ENCODE measurements at regions of chr11 and their contacts with region 1.

Region 1: DNA sequence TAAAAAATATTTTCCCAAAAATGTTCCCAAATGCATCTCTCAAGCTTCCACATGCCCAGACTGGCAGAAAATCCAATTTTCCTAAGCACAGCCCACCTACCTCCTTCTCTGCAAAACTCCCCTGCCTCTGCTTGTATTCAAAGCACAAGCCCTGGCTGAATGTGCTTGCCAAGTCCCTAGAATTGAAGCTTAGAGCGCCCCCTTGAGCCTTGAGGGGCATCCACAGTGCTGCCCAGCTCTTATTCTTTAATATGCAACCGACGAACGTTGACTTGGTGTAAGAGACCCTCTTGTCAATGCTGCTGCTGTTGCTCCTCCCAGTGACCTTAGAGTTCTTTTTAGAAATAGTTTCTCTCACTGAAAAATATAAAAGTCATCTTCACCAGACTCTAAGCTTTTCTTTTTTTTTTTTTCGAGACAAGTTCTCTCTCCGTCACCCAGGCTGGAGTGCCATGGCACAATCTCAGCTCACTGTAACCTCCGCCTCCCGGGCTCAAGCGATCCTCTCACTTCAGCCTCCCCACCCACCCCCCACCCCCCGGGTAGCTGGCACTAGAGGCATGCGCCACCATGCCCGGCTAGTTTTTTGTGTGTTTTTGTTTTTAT is 63.5 kb upstream of the CAPRIN1 start:
- DNase-seq: peak; percentile 29
- ATAC-seq: peak; percentile 92
- H3K4me3 Mint-ChIP-seq: no peak overlapping the region
- H3K27ac Mint-ChIP-seq: no peak overlapping the region
- H3K4me1 Mint-ChIP-seq: peaks cover 3% of the 10 kb centered on the region
- H3K27me3 Mint-ChIP-seq: peaks cover 7% of the 10 kb centered on the region
- CTCF ChIP-seq: no peak

Region 2: GRCh38 chr11:33808228-33808828 is 179.8 kb before region 1 on chr11:
- CTCF ChIA-PET with region 1: interaction called, 52 read pairs
- POLR2A ChIA-PET with region 1: interaction called, 6 read pairs
- intact Hi-C with region 1: loop called (anchors 1 kb)
- DNase-seq: peak; percentile 76
- ATAC-seq: peak; percentile 91
- H3K4me3 Mint-ChIP-seq: no peak overlapping the region
- H3K27ac Mint-ChIP-seq: no peak overlapping the region
- H3K4me1 Mint-ChIP-seq: no peaks in the 10 kb centered on the region
- H3K27me3 Mint-ChIP-seq: peaks cover 6% of the 10 kb centered on the region
- CTCF ChIP-seq: peak; percentile 95

Region 3: GRCh38 chr11:33829433-33830141 is 158.5 kb before region 1 on chr11:
- CTCF ChIA-PET with region 1: interaction called, 14 read pairs
- POLR2A ChIA-PET with region 1: no interaction called
- intact Hi-C with region 1: no loop called
- DNase-seq: no peak
- ATAC-seq: peak; percentile 83
- H3K4me3 Mint-ChIP-seq: peak overlapping the region; percentile 80
- H3K27ac Mint-ChIP-seq: no peak overlapping the region
- H3K4me1 Mint-ChIP-seq: peaks cover 5% of the 10 kb centered on the region
- H3K27me3 Mint-ChIP-seq: peaks cover 50% of the 10 kb centered on the region
- CTCF ChIP-seq: no peak

Region 4: DNA sequence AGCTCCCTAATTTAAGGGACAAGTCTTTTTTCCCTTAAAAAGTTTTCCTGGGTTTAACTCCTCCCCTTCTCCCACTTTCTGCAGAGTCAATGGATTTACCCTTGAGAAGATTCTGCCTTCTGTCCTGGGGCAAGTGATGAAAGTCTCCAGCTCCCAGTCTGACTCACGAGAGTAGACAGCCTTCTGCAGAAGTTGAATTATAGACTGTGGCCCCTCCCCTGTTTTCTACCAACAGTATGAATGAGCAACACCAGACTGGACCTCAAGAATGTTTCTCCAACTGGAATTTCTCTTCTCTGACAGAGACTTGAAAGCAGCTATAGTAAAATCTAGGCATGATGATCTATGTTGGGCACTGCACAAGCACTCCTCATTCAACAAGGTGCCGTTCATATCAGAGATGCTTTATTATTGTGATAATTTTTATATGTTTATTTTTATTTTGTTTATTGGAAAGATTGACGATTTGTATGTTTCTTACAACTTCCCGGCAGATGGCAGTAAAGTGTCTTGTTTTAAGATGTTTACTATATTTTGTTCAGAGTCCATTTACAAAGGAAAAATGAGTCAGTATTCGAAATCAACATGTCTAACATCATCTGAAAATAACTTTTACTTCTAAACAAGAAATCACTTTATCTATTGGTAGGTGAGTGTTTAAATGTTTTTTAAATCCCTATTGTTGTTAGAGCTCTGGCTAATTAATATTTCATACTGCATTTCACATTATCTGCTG is 152.8 kb before region 1 on chr11:
- CTCF ChIA-PET with region 1: interaction called, 14 read pairs
- POLR2A ChIA-PET with region 1: no interaction called
- intact Hi-C with region 1: loop called (anchors 1 kb)
- DNase-seq: no peak
- ATAC-seq: no peak
- H3K4me3 Mint-ChIP-seq: no peak overlapping the region
- H3K27ac Mint-ChIP-seq: no peak overlapping the region
- H3K4me1 Mint-ChIP-seq: no peaks in the 10 kb centered on the region
- H3K27me3 Mint-ChIP-seq: peaks cover 30% of the 10 kb centered on the region
- CTCF ChIP-seq: no peak

Region 5: GRCh38 chr11:33847251-33847650 is 140.8 kb before region 1 on chr11:
- CTCF ChIA-PET with region 1: interaction called, 12 read pairs
- POLR2A ChIA-PET with region 1: no interaction called
- intact Hi-C with region 1: no loop called
- DNase-seq: no peak
- ATAC-seq: no peak
- H3K4me3 Mint-ChIP-seq: no peak overlapping the region
- H3K27ac Mint-ChIP-seq: no peak overlapping the region
- H3K4me1 Mint-ChIP-seq: no peaks in the 10 kb centered on the region
- H3K27me3 Mint-ChIP-seq: peaks cover 5% of the 10 kb centered on the region
- CTCF ChIP-seq: no peak

Region 6: GRCh38 chr11:33857933-33858371 is 130.1 kb before region 1 on chr11:
- CTCF ChIA-PET with region 1: interaction called, 35 read pairs
- POLR2A ChIA-PET with region 1: no interaction called
- intact Hi-C with region 1: loop called (anchors 1 kb)
- DNase-seq: peak; percentile 65
- ATAC-seq: peak; percentile 98
- H3K4me3 Mint-ChIP-seq: no peak overlapping the region
- H3K27ac Mint-ChIP-seq: no peak overlapping the region
- H3K4me1 Mint-ChIP-seq: peaks cover 8% of the 10 kb centered on the region
- H3K27me3 Mint-ChIP-seq: no peaks in the 10 kb centered on the region
- CTCF ChIP-seq: peak; percentile 39

Region 7: GRCh38 chr11:33976495-33977199 is 11.4 kb before region 1 on chr11:
- CTCF ChIA-PET with region 1: interaction called, 24 read pairs
- POLR2A ChIA-PET with region 1: no interaction called
- intact Hi-C with region 1: loop called (anchors 1 kb)
- DNase-seq: no peak
- ATAC-seq: no peak
- H3K4me3 Mint-ChIP-seq: no peak overlapping the region
- H3K27ac Mint-ChIP-seq: no peak overlapping the region
- H3K4me1 Mint-ChIP-seq: no peaks in the 10 kb centered on the region
- H3K27me3 Mint-ChIP-seq: peaks cover 4% of the 10 kb centered on the region
- CTCF ChIP-seq: no peak

Measured in activated B cell treated with CpG ODN at 0.5 μM for 24 hours (primary cell).